ENCODE measurements at regions of chr17 and their contacts with region 1.

Region 1: DNA sequence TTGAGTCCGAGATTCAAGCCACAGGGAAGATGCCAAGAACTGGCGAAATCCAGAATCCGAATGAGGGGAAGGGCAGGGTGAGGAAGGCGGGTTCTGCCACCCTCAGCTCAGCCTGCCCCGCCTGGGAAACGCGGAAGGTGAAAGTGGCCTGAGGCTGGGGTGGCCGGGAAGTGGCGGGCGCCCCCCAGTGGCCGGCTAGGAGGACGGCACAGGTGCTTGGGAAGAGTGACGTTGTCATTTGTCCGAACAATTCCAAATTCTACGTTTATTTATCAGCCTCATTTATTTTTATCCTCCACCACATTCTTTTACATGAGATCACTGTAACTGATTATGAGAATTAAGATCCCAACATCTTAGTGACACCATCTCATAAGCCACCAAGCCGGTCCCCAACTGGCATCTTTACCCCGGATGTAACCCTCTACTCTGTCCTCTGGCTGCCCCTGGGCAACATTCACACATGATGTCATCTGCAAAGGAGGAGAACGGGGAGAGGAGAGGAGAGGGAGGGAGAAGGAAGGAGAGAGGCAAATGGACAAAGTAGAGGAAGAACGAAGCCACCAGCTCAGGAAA is 21.3 kb downstream of the SRCIN1 start:
- DNase-seq: peak; percentile 79 to 86
- H3K4me3 ChIP-seq: no peak overlapping the region
- H3K27ac ChIP-seq: no peak overlapping the region
- H3K4me1 ChIP-seq: peaks cover 6 to 20% (median 15%) of the 10 kb centered on the region in 4 donors
- H3K27me3 ChIP-seq: peaks cover 2 to 97% (median 26%) of the 10 kb centered on the region in 3 donors
- CTCF ChIP-seq: peak in 5 of 7 experiments; percentile 81 to 92 (median 89)
- EP300 ChIP-seq: no peak
- POLR2A ChIP-seq: no peak

Region 2: GRCh38 chr17:38498186-38498752 is 86.2 kb before region 1 on chr17:
- intact Hi-C with region 1: loop called (anchors 10 kb)
- DNase-seq: no peak
- H3K4me3 ChIP-seq: no peak overlapping the region
- H3K27ac ChIP-seq: no peak overlapping the region
- H3K4me1 ChIP-seq: no peaks in the 10 kb centered on the region
- H3K27me3 ChIP-seq: no peaks in the 10 kb centered on the region
- CTCF ChIP-seq: no peak
- EP300 ChIP-seq: no peak
- POLR2A ChIP-seq: no peak

Measured in stomach (tissue), 19 donors.